HepG2 (cell line): ENCODE measurements at regions of chr12 and their contacts with region 1.

Region 1: DNA sequence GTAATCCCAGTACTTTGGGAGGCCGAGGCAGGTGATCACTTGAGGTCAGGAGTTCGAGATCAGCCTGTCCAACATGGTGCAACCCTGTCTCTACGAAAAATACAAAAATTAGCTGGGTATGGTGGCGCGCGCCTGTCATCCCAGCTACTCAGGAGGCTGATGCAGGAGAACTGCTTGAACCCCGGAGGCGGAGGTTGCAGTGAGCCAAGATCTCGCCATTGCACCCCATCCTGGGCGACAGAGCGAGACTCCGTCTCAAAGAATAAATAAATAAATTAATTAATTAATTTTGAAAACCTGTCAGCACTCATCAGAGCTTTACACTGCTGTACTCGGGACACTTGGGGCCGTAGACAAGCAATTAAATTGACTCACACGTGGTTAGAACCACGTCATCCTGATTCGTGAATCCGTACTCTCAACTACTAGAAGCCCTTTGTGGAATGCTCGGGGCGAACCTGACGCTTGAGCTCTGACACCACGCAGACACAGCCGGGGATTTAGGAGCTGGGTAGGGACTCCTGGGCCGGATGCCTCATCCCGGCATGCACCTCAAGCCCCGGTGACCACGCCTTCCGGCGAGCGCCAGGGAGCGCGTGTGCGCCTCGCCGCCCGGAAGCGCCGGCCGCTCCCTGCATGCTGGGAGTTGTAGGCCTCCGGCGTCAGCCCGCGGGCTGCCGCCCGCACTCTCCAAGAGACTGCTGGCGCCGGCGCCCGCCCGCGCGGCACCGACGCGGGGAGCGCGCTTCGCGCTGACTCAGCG is at the start of gene XPOT:
- DNase-seq: peak; percentile 92
- ATAC-seq: peak; percentile 94
- H3K4me3 ChIP-seq: peak within 1 kb of the TSS; percentile 78 to 95 (median 85)
- H3K27ac ChIP-seq: peak within 1 kb of the TSS; percentile 100
- H3K4me1 ChIP-seq: peaks cover 47% of the 10 kb centered on the region
- H3K27me3 ChIP-seq: no peaks in the 10 kb centered on the region; a peak in 1 of 5 replicates
- CTCF ChIP-seq: peak; percentile 27
- EP300 ChIP-seq: peak in 1 of 2 experiments; percentile 43; a peak in 1 of 4 replicates
- POLR2A ChIP-seq: peak; percentile 84 to 93
- RAD21 ChIP-seq: no peak
- total RNA-seq, gene XPOT: 102 and 136 TPM in 2 replicates

Region 2: DNA sequence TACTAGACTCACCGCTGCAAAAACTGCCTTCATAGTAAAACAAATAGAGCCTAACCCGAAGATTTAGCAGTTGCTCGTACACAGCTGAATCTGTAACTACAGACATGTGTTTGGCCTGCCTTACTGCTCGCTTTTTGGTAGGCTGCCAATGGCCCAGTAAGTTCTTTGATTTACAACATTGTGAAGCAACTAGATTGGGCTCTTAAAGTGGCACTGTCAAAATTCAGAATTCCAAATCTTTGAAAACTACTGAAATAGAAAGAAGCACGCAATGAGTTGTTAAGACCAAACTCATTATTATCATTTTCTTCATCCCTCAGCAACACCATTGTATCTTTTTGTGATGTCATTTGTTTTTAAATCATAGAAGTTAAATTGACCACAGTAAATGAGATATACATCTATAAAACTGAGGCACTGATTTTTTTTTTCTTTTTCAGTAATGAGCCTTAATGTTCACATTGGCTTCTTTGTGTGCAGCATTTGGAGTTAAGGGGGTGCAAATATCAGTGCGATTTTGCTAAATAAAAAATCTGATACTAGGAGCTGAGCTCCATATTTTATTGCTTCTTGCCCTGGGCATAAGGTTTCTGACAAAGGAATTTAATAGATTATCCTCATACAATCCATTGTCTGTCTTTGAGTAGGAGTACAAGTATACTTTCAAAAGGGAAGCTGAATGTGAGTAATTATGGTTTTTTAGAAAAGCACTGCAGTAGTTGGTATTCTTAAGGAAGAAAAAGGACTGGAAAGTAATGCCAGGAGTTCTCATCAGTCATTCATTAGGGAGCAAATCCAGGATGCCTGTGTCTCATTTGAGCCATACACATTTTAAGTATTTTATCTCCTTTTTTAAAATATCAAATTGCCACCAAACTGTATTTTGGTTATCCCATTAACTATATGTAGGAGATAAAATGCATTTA is 320.3 kb before region 1 on chr12:
- CTCF ChIA-PET with region 1: no interaction called
- POLR2A ChIA-PET with region 1: no interaction called
- in situ Hi-C with region 1: no loop called
- intact Hi-C with region 1: loop called (anchors 5 kb)
- DNase-seq: no peak
- ATAC-seq: no peak
- H3K4me3 ChIP-seq: no peak overlapping the region
- H3K27ac ChIP-seq: no peak overlapping the region
- H3K4me1 ChIP-seq: no peaks in the 10 kb centered on the region
- H3K27me3 ChIP-seq: no peaks in the 10 kb centered on the region
- CTCF ChIP-seq: no peak
- EP300 ChIP-seq: no peak
- POLR2A ChIP-seq: no peak
- RAD21 ChIP-seq: no peak

Region 3: DNA sequence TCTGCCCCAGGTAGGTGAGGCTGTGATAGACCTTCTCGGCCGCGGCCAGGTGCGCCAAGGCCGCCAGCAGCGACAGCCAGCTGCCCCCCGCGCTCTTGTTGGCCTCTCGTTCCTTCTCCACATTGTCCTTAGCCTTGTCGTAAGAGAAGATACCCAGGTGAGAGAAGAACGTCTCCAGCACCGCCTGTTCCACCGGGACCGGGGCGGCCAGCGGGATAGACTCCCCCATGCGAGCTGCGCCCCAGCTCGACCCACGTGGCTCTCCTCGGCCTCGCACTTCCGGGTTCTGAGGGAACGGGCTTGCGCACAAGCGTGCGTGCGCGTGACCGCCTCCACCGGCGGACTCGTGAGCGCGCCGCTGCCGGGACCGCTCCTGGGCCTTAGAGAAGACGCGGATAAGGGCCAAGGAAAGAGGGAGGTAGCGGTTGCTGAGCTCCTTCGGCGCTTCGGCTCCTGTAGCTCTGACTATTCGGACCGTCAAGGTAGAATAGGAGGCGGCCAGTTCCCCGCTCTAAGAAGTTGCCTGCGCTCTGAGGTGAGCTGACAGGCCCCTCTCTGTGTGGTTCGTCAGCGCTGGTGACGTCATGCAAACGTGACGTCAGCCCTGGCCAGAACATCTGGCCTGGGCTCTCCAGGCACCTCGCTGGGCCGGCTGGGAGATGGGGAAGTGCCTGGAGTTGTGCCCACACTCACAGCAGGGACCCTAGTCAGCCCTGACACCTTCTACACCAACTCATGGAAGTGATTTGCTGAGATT is 181.7 kb before region 1 on chr12 and contains the start of gene KICS2:
- CTCF ChIA-PET with region 1: no interaction called
- POLR2A ChIA-PET with region 1: interaction called, 6 read pairs
- in situ Hi-C with region 1: no loop called
- intact Hi-C with region 1: loop called (anchors 2 kb)
- DNase-seq: peak; percentile 82
- ATAC-seq: peak; percentile 96
- H3K4me3 ChIP-seq: peak within 1 kb of the TSS; percentile 62 to 92 (median 86)
- H3K27ac ChIP-seq: peak within 1 kb of the TSS; percentile 78
- H3K4me1 ChIP-seq: peaks cover 20% of the 10 kb centered on the region
- H3K27me3 ChIP-seq: no peaks in the 10 kb centered on the region
- CTCF ChIP-seq: peak; percentile 24; the same call in 1 of the 2 replicates
- EP300 ChIP-seq: no peak
- POLR2A ChIP-seq: peak; percentile 88 to 91
- RAD21 ChIP-seq: peak; percentile 26; the same call in 1 of the 2 replicates
- total RNA-seq, gene KICS2: 6.6 and 6.8 TPM in 2 replicates

Region 4: GRCh38 chr12:64451687-64452558 is 48.0 kb after region 1 on chr12 and contains the start of gene TBK1:
- CTCF ChIA-PET with region 1: no interaction called
- POLR2A ChIA-PET with region 1: interaction called, 3 read pairs
- in situ Hi-C with region 1: no loop called
- intact Hi-C with region 1: loop called (anchors 5 kb)
- DNase-seq: peak; percentile 80
- ATAC-seq: peak; percentile 93
- H3K4me3 ChIP-seq: peak within 1 kb of the TSS; percentile 90 to 98 (median 96)
- H3K27ac ChIP-seq: peak within 1 kb of the TSS; percentile 85
- H3K4me1 ChIP-seq: peaks cover 42% of the 10 kb centered on the region
- H3K27me3 ChIP-seq: no peaks in the 10 kb centered on the region
- CTCF ChIP-seq: no peak
- EP300 ChIP-seq: no peak
- POLR2A ChIP-seq: peak in 1 of 2 experiments; percentile 86
- RAD21 ChIP-seq: 0 out of 2 replicates have a peak, but pooled peaks have one; percentile 16
- total RNA-seq, gene TBK1: 25.2 and 35.1 TPM in 2 replicates

Region 5: GRCh38 chr12:64518396-64518795 is 114.5 kb after region 1 on chr12:
- CTCF ChIA-PET with region 1: no interaction called
- POLR2A ChIA-PET with region 1: no interaction called
- in situ Hi-C with region 1: no loop called
- intact Hi-C with region 1: no loop called
- DNase-seq: no peak
- ATAC-seq: no peak
- H3K4me3 ChIP-seq: no peak overlapping the region
- H3K27ac ChIP-seq: no peak overlapping the region
- H3K4me1 ChIP-seq: 0 out of 2 replicates have a peak, but pooled peaks cover 8% of the 10 kb centered on the region
- H3K27me3 ChIP-seq: no peaks in the 10 kb centered on the region
- CTCF ChIP-seq: no peak
- EP300 ChIP-seq: no peak
- POLR2A ChIP-seq: no peak
- RAD21 ChIP-seq: no peak

Region 6: GRCh38 chr12:65067383-65067782 is 663.5 kb after region 1 on chr12:
- CTCF ChIA-PET with region 1: no interaction called
- POLR2A ChIA-PET with region 1: no interaction called
- in situ Hi-C with region 1: no loop called
- intact Hi-C with region 1: no loop called
- DNase-seq: no peak
- ATAC-seq: no peak
- H3K4me3 ChIP-seq: no peak overlapping the region
- H3K27ac ChIP-seq: no peak overlapping the region
- H3K4me1 ChIP-seq: no peaks in the 10 kb centered on the region
- H3K27me3 ChIP-seq: no peaks in the 10 kb centered on the region
- CTCF ChIP-seq: no peak
- EP300 ChIP-seq: no peak
- POLR2A ChIP-seq: no peak
- RAD21 ChIP-seq: no peak

Region 7: GRCh38 chr12:65169320-65170208 is 765.7 kb after region 1 on chr12 and contains the start of gene LEMD3:
- CTCF ChIA-PET with region 1: no interaction called
- POLR2A ChIA-PET with region 1: no interaction called
- in situ Hi-C with region 1: no loop called
- intact Hi-C with region 1: loop called (anchors 10 kb)
- DNase-seq: peak; percentile 90
- ATAC-seq: peak; percentile 94
- H3K4me3 ChIP-seq: peak within 1 kb of the TSS; percentile 92 to 97 (median 94)
- H3K27ac ChIP-seq: peak within 1 kb of the TSS; percentile 88
- H3K4me1 ChIP-seq: peaks cover 35% of the 10 kb centered on the region
- H3K27me3 ChIP-seq: no peaks in the 10 kb centered on the region; a peak in 1 of 5 replicates
- CTCF ChIP-seq: no peak
- EP300 ChIP-seq: no peak
- POLR2A ChIP-seq: peak; percentile 88 to 90
- RAD21 ChIP-seq: 0 out of 2 replicates have a peak, but pooled peaks have one; percentile 39
- total RNA-seq, gene LEMD3: 12.3 and 18.7 TPM in 2 replicates